ENCODE measurements at regions of chr10 and their contacts with region 1.

Region 1: DNA sequence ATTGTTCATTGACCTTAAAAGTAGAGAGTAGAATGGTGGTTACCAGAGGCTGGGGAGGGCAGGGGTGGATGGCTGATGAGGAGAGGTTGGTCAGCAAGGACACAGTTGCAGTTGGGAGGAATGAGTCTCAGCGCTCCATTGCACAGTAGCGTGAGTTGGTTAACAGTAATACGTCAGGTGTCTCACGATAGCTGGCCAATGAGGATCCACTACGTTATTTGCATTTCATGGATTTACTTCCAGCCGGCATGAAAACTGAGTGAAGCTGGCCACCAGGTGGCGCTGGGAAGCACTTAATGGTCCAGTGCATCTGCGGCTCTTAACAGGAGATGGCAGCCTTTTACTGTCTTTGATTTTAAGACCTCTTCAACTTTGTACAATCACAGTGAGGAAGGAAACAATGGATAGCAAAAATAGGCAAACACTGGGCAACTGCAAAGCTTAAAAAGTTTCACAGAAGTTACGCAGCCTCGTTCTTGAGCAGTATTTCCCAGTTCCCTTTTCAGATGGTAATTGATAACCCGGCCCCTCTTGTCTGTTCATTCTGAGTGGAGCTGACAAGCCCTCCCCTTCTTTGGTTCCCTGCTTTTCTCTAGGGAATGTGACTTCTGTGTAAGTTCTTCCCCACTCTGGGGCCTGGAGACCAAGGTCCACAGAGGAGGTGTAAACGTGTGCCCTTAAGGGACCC is 23.7 kb downstream of the AKR1E2 start:
- DNase-seq: peak; percentile 95
- H3K4me3 Mint-ChIP-seq: peak overlapping the region; percentile 22
- H3K27ac Mint-ChIP-seq: peak overlapping the region; percentile 37
- H3K4me1 Mint-ChIP-seq: peaks cover 6% of the 10 kb centered on the region
- H3K27me3 Mint-ChIP-seq: no peaks in the 10 kb centered on the region

Region 2: DNA sequence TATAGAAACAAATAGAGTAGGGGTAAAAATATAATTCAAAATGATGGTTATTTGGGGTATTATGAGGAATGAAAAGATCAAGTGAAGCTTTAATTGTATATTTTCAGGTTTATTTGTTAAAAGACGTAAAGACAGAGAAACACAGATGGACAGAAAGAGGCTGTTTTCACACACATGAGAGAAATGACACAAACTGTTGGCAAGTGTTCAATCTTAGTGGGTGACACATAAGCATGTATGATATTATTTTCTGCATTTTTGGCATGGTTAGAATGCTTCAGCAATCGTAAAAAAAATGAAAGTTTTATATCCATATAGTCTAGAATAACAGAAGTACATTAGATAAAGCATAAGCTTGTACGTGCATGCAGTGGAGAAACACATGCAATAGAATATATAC is 488.1 kb before region 1 on chr10:
- CTCF ChIA-PET with region 1: no interaction called
- intact Hi-C with region 1: no loop called
- DNase-seq: no peak
- H3K4me3 Mint-ChIP-seq: no peak overlapping the region
- H3K27ac Mint-ChIP-seq: no peak overlapping the region
- H3K4me1 Mint-ChIP-seq: no peaks in the 10 kb centered on the region
- H3K27me3 Mint-ChIP-seq: peaks cover 8% of the 10 kb centered on the region

Region 3: DNA sequence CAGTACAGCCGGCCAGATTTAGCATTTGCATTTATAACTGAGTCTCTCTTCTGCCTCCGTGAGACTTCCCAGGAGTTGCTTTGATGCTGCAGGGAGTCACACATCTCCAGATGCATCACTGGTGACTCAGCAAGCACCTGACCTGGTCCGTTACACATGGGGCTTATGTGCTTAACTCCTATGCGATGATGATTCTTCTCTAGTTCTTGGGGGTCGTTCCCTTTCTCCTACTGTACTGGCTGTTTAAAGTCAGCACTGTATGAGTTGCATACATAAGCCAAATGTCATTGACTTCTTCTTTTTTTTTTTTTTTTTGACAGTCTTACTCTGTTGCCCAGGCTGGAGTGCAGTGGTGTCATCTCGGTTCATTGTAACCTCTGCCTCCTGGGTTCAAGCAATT is 36.7 kb before region 1 on chr10:
- CTCF ChIA-PET with region 1: interaction called, 10 read pairs
- intact Hi-C with region 1: loop called (anchors 1 kb)
- DNase-seq: no peak
- H3K4me3 Mint-ChIP-seq: no peak overlapping the region
- H3K27ac Mint-ChIP-seq: no peak overlapping the region
- H3K4me1 Mint-ChIP-seq: no peaks in the 10 kb centered on the region
- H3K27me3 Mint-ChIP-seq: peaks cover 2% of the 10 kb centered on the region

Region 4: GRCh38 chr10:4839401-4839800 is 10.3 kb before region 1 on chr10:
- CTCF ChIA-PET with region 1: interaction called, 46 read pairs
- intact Hi-C with region 1: no loop called
- DNase-seq: no peak
- H3K4me3 Mint-ChIP-seq: no peak overlapping the region
- H3K27ac Mint-ChIP-seq: no peak overlapping the region
- H3K4me1 Mint-ChIP-seq: peaks cover 27% of the 10 kb centered on the region
- H3K27me3 Mint-ChIP-seq: no peaks in the 10 kb centered on the region

Region 5: GRCh38 chr10:5094265-5095205 is 244.8 kb after region 1 on chr10 and contains the start of gene AKR1C3:
- CTCF ChIA-PET with region 1: interaction called, 4 read pairs
- intact Hi-C with region 1: loop called (anchors 1 kb)
- DNase-seq: no peak
- H3K4me3 Mint-ChIP-seq: peak within 1 kb of the TSS; percentile 55
- H3K27ac Mint-ChIP-seq: no peak within 1 kb of the TSS
- H3K4me1 Mint-ChIP-seq: peaks cover 9% of the 10 kb centered on the region
- H3K27me3 Mint-ChIP-seq: peaks cover 2% of the 10 kb centered on the region
- total RNA-seq, gene AKR1C3: 0.33 to 0.47 TPM

Region 6: DNA sequence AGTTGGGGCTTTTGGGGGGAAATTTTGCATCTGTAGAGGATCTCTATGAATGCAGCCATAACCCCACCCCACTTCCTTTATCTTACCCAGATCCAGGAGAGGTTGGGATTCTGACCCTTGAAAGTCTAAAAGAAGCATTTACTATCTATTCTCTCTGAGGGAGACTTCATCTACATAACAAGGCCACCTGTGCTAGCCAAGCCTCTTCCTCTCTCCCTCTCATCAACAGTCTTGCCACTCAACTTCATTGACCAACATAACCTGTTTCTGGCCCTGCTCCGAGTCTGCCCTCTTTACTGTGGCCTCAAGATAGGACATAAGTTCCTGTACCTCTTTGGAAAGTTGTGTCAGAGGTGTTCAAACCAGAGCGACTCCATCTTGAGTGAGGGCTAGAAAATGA is 535.5 kb after region 1 on chr10:
- CTCF ChIA-PET with region 1: interaction called, 17 read pairs
- intact Hi-C with region 1: loop called (anchors 1 kb)
- DNase-seq: no peak
- H3K4me3 Mint-ChIP-seq: no peak overlapping the region
- H3K27ac Mint-ChIP-seq: no peak overlapping the region
- H3K4me1 Mint-ChIP-seq: no peaks in the 10 kb centered on the region
- H3K27me3 Mint-ChIP-seq: no peaks in the 10 kb centered on the region

Region 7: DNA sequence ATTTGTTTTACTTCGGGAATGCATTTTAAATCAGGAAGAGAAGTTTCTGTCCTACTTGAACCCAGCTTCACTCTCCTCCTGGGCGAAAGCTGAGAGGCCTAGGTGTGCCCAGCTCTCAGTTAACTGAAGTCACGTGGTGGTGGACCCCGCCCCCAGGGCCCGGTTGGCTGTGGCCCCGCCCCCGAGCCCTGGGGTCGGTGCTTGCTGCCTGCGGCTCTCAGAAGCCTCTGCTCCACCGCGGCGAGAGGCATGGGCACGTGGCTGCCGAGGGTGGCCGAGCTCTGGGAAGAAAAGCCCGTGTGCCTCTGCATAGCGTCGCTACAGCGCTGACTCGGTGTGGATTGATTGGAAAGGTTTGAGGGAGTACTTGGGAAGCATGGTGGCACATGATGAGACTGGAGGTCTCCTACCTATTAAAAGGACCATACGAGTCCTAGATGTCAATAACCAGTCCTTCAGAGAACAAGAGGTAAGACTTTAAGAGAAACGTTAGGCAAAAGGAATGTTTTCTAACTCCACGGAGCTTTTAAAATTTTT is 596.8 kb after region 1 on chr10:
- CTCF ChIA-PET with region 1: interaction called, 4 read pairs
- intact Hi-C with region 1: loop called (anchors 5 kb)
- DNase-seq: peak; percentile 77
- H3K4me3 Mint-ChIP-seq: peak overlapping the region; percentile 61
- H3K27ac Mint-ChIP-seq: peak overlapping the region; percentile 33
- H3K4me1 Mint-ChIP-seq: peaks cover 48% of the 10 kb centered on the region
- H3K27me3 Mint-ChIP-seq: no peaks in the 10 kb centered on the region

Region 8: DNA sequence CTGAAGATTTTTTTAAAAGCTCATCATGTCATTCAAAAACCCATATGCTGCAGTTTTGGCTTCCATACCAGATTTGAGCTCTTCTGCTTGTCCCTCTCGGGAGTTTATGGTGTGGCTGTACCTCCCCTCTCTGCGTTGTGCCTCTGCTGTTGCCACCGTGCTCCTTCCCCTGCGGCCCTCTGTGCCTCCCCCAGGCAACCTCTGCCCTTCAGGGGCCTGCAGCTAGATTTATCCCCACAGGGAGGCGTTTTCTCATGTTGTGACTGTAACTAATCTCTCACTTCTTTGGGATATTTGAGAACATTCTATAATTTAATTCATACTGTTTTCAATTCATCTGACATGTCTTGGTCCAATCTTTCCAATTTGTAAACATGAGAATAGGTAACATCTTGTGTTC is 887.7 kb after region 1 on chr10:
- CTCF ChIA-PET with region 1: no interaction called
- intact Hi-C with region 1: no loop called
- DNase-seq: no peak
- H3K4me3 Mint-ChIP-seq: no peak overlapping the region
- H3K27ac Mint-ChIP-seq: no peak overlapping the region
- H3K4me1 Mint-ChIP-seq: peaks cover 2% of the 10 kb centered on the region
- H3K27me3 Mint-ChIP-seq: no peaks in the 10 kb centered on the region